Ascending aorta (tissue), 2 donors: ENCODE measurements at regions of chr2 and their contacts with region 1.

Region 1: DNA sequence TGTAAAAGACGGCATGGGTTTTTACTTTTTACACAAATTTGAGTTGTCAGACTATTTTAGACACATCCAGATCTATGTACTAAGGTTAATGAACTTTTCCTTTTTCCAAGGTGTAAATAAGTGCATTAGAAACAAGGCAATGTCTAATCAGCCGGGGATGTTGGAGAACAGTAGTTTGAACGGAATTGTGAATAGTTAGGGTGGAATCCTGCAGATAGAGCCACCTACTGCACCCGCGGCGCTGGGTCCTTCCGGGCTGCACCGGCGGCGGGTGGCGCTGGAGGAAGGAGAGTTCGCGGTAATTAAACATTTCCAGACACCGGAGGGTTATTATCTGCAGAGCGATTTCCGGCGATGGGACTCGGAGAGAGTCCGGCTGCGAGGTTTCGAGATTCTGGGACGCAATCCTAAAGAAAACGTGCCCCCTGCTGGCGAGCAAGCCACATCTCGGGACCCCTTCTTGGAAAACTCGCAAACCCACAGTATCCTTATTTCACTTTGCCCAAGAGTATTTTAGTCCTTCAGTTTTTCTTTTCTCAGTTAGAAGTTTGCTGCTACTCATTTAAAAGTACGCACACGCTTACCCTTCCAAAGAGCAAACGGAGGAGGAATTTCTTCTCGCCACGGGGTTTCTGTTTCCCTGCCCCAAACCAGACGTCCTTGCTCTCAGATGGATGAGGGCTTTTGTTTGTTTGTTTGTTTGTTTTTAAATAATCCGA is 4.5 kb upstream of the OSR1 start:
- DNase-seq: peak in 1 of 2 donors; percentile 87
- H3K4me3 ChIP-seq: peak overlapping the region; percentile 73 to 91
- H3K27ac ChIP-seq: peak overlapping the region; percentile 51 to 96
- H3K4me1 ChIP-seq: peaks cover 11 to 14% of the 10 kb centered on the region in 2 donors
- H3K27me3 ChIP-seq: no peaks in the 10 kb centered on the region
- CTCF ChIP-seq: peak; percentile 67 to 72 (median 68)

Region 2: GRCh38 chr2:18749912-18750526 is 612.9 kb before region 1 on chr2:
- intact Hi-C with region 1: loop called (anchors 5 kb)
- DNase-seq: peak in 1 of 2 donors; percentile 71
- H3K4me3 ChIP-seq: no peak overlapping the region
- H3K27ac ChIP-seq: no peak overlapping the region
- H3K4me1 ChIP-seq: no peaks in the 10 kb centered on the region
- H3K27me3 ChIP-seq: no peaks in the 10 kb centered on the region
- CTCF ChIP-seq: peak; percentile 52 to 83 (median 79)

Region 3: DNA sequence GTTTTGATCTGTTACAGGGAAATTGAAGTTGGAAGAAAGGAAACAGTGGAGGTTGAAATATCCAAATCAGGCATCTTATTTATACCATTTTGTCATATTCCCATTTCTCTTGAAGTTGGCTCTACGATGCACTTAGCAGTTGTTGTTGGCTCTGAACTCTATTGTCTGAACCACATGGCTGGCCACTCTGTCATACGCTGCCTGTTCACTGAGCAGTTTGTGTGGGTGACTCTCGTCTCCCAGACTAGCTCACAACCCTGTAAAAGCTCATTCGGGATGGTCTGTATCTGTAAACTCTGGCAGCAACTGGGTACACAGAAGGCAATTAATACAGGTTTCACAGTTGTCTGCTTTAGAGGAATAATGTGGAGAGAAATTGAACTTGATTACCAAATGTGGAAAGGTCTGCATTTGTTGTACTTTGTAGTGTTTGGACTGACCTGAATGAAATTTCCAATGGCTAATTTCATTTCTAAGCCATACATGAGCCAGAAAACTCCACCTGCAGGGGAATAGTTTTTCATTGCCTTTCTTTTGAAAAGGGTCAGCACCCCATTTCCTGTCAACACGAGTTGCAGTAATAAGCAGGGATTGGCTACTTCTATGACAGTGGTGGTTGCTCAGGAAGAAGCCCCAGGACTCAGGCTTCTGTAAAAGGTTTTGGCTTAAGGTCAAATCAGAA is 382.7 kb before region 1 on chr2:
- intact Hi-C with region 1: loop called (anchors 5 kb)
- DNase-seq: no peak
- H3K4me3 ChIP-seq: no peak overlapping the region
- H3K27ac ChIP-seq: peak overlapping the region; percentile 23 to 35
- H3K4me1 ChIP-seq: peaks cover 4 to 23% of the 10 kb centered on the region in 2 donors
- H3K27me3 ChIP-seq: no peaks in the 10 kb centered on the region
- CTCF ChIP-seq: no peak

Region 4: GRCh38 chr2:18987592-18988073 is 375.3 kb before region 1 on chr2:
- intact Hi-C with region 1: loop called (anchors 5 kb)
- DNase-seq: peak in 1 of 2 donors; percentile 86
- H3K4me3 ChIP-seq: no peak overlapping the region
- H3K27ac ChIP-seq: no peak overlapping the region
- H3K4me1 ChIP-seq: peaks cover 0 to 20% of the 10 kb centered on the region in 2 donors
- H3K27me3 ChIP-seq: no peaks in the 10 kb centered on the region
- CTCF ChIP-seq: peak in 1 of 3 experiments; percentile 29

Region 5: GRCh38 chr2:19461504-19462255 is 98.8 kb after region 1 on chr2:
- intact Hi-C with region 1: no loop called
- DNase-seq: no peak
- H3K4me3 ChIP-seq: no peak overlapping the region
- H3K27ac ChIP-seq: no peak overlapping the region
- H3K4me1 ChIP-seq: peaks cover 0 to 3% of the 10 kb centered on the region in 2 donors
- H3K27me3 ChIP-seq: no peaks in the 10 kb centered on the region
- CTCF ChIP-seq: no peak

Region 6: GRCh38 chr2:19667085-19667484 is 304.2 kb after region 1 on chr2:
- intact Hi-C with region 1: loop called (anchors 5 kb)
- DNase-seq: no peak
- H3K4me3 ChIP-seq: no peak overlapping the region
- H3K27ac ChIP-seq: peak overlapping the region; percentile 17 to 31
- H3K4me1 ChIP-seq: peaks cover 4 to 11% of the 10 kb centered on the region in 2 donors
- H3K27me3 ChIP-seq: no peaks in the 10 kb centered on the region
- CTCF ChIP-seq: peak in 2 of 3 experiments; percentile 20 to 24

Region 7: GRCh38 chr2:19746611-19747309 is 383.8 kb after region 1 on chr2:
- intact Hi-C with region 1: loop called (anchors 5 kb)
- DNase-seq: peak in 1 of 2 donors; percentile 67
- H3K4me3 ChIP-seq: no peak overlapping the region
- H3K27ac ChIP-seq: peak overlapping the region; percentile 76
- H3K4me1 ChIP-seq: peaks cover 15 to 34% of the 10 kb centered on the region in 2 donors
- H3K27me3 ChIP-seq: no peaks in the 10 kb centered on the region
- CTCF ChIP-seq: peak; percentile 15 to 47 (median 29)

Region 8: GRCh38 chr2:19796035-19796695 is 433.3 kb after region 1 on chr2:
- intact Hi-C with region 1: loop called (anchors 5 kb)
- DNase-seq: no peak
- H3K4me3 ChIP-seq: no peak overlapping the region
- H3K27ac ChIP-seq: peak overlapping the region; percentile 53 to 61
- H3K4me1 ChIP-seq: peaks cover 0 to 15% of the 10 kb centered on the region in 2 donors
- H3K27me3 ChIP-seq: no peaks in the 10 kb centered on the region
- CTCF ChIP-seq: no peak